ENCODE measurements at regions of chr2 and their contacts with region 1.

Region 1: DNA sequence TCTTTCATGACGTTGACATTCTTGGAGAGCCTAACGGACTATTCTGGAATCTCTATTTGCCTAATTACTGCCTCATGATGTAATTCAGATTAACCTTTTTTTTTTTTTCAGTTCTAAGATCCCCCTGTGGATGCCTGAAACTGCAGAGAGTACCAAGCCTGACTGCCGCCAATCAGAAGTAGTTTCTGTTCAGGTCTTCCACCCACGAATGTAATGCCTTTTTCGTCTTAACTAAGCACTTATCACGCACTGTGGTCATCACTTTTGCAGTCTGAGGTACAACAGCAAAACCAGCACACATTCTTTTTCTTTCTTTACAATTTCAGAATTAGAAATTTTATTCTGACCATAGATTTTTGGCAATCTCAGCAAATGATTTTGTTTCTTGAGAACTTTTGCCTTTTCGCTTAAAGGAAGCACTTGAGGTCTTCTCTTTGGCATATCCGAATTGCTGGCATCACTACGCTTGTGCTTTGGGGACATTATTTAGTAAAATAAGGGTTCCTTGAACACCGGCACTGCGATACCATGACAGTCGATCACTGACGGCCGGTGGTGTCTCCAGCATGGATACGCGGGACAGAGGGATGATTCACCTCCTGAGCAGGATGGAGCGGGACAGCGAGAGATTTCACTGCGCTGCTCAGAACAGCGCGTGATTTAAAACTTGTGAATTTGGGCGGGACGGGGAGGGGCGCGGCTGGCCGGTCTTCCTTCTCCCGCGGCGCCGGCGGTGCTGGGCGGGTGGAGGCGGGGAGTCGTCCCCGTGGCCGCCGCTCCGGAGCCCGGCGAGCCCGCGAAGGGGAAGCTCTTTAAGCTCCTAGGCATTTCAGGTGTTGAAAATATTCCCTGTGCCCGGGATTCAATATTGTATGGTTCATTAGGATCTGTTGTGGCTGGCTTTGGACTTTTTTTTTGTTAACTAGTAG is 32.0 kb upstream of the GPR55 start:
- DNase-seq: peak; percentile 63
- H3K4me3 Mint-ChIP-seq: peak overlapping the region; percentile 85
- H3K27ac Mint-ChIP-seq: peak overlapping the region; percentile 93
- H3K4me1 Mint-ChIP-seq: peaks cover 42% of the 10 kb centered on the region
- H3K27me3 Mint-ChIP-seq: peaks cover 42% of the 10 kb centered on the region

Region 2: DNA sequence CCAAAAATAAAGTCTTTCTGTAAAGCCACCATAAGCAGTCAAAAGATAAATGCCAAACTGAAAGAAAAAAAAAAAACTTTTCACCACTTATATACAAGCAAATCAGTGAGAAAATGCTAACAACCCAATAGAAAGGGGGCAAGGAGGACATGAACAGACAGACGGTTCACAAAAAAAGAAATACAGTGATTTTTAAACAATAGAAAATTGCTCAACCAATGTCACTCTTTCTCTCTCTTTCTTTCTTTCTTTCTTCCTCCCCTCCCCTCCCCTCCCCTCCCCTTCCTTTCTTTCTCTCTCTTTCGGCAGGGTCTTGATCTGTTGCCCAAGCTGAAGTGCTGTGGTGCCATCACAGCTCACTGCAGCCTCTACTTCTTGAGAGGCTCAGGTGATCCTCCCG is 10.0 kb after region 1 on chr2:
- CTCF ChIA-PET with region 1: no interaction called
- POLR2A ChIA-PET with region 1: interaction called, 32 read pairs
- DNase-seq: no peak
- H3K4me3 Mint-ChIP-seq: no peak overlapping the region
- H3K27ac Mint-ChIP-seq: no peak overlapping the region
- H3K4me1 Mint-ChIP-seq: peaks cover 14% of the 10 kb centered on the region
- H3K27me3 Mint-ChIP-seq: peaks cover 22% of the 10 kb centered on the region

Region 3: GRCh38 chr2:230974096-230974913 is 17.2 kb after region 1 on chr2:
- CTCF ChIA-PET with region 1: no interaction called
- POLR2A ChIA-PET with region 1: interaction called, 32 read pairs
- DNase-seq: peak; percentile 77
- H3K4me3 Mint-ChIP-seq: peak overlapping the region; percentile 9
- H3K27ac Mint-ChIP-seq: peak overlapping the region; percentile 78
- H3K4me1 Mint-ChIP-seq: peaks cover 60% of the 10 kb centered on the region
- H3K27me3 Mint-ChIP-seq: peaks cover 35% of the 10 kb centered on the region

Region 4: GRCh38 chr2:230981704-230982103 is 24.6 kb after region 1 on chr2:
- CTCF ChIA-PET with region 1: interaction called, 7 read pairs
- POLR2A ChIA-PET with region 1: interaction called, 15 read pairs
- DNase-seq: peak; percentile 49
- H3K4me3 Mint-ChIP-seq: peak overlapping the region; percentile 74
- H3K27ac Mint-ChIP-seq: peak overlapping the region; percentile 86
- H3K4me1 Mint-ChIP-seq: peaks cover 81% of the 10 kb centered on the region
- H3K27me3 Mint-ChIP-seq: peaks cover 41% of the 10 kb centered on the region

Region 5: DNA sequence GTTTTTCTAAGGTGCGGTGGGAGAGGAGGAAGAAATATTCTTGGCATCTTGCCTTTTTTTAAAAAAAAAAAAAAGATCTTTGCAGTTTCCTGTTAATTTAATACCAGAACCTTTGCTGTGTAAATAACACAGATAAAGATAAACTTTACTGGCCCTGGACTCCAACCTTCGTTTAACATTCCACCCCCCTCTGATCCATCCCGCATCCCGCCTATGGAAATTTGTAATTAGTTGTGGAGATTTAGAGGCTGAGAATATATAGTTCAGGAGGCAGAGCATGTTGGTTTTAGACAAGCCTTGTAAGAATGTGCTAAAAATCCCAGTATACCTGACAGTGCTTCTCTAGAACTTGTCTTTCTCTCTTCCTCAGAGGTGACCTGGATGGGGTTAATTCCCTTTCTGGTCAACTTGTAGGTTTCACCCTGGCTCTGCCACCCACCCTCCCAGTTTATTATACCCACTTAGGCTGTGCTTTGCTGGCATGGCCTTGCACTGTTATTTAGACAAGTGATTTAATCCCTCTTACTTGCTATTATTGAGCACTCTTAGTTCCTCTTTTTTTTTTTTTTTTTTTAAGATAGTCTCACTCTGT is 77.3 kb after region 1 on chr2:
- CTCF ChIA-PET with region 1: no interaction called
- POLR2A ChIA-PET with region 1: no interaction called
- DNase-seq: no peak
- H3K4me3 Mint-ChIP-seq: no peak overlapping the region
- H3K27ac Mint-ChIP-seq: no peak overlapping the region
- H3K4me1 Mint-ChIP-seq: peaks cover 6% of the 10 kb centered on the region
- H3K27me3 Mint-ChIP-seq: peaks cover 55% of the 10 kb centered on the region

Region 6: GRCh38 chr2:231046916-231047273 is 89.8 kb after region 1 on chr2:
- CTCF ChIA-PET with region 1: no interaction called
- POLR2A ChIA-PET with region 1: no interaction called
- DNase-seq: no peak
- H3K4me3 Mint-ChIP-seq: no peak overlapping the region
- H3K27ac Mint-ChIP-seq: no peak overlapping the region
- H3K4me1 Mint-ChIP-seq: peaks cover 3% of the 10 kb centered on the region
- H3K27me3 Mint-ChIP-seq: peaks cover 39% of the 10 kb centered on the region

Measured in activated CD4-positive, alpha-beta memory T cell treated with anti-CD3 and anti-CD28 coated beads, Interleukin-2, amount 10 ng/mL, durations not matched to agents 7 days and 5 days (primary cell).